HAP-1 (cell line): ENCODE measurements at regions of chr12 and their contacts with region 1.

Region 1: DNA sequence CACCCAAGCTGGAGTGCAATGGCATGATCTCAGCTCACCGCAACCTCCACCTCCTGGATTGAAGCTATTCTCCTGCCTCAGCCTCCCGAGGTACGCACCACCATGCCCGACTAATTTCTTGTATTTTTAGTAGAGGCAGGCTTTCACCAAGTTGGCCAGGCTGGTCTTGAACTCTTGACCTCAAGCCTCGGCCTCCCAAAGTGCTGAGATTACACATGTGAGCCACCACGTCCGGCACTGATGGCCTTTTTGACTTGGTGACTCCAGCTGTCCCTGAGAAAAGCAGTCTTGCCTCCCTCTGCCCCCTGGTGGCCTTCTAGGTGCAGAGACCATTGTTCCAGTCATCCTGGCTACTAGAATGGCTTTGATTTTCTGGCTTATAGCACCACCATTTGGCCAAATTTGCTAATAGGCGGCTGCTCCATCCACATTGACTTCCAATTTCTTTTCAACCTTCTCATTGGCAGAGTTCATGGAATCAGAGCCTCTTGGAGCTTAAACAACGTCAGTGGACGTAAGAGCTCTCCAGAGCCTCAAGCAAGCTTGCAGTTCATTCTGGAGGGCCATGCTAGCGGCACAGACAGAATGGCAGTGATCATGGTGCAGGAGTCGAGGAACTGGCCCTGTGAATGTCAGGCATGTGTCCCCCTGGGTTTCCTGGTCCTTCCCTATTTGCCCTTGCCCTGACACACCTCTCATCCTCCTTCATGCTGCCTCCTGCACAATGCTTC is 25.4 kb upstream of the EIF4B start:
- DNase-seq: peak; percentile 91 to 95
- H3K4me3 ChIP-seq: no peak overlapping the region
- H3K4me1 ChIP-seq: peaks cover 11% of the 10 kb centered on the region
- H3K27me3 ChIP-seq: no peaks in the 10 kb centered on the region

Region 2: GRCh38 chr12:51726931-51727330 is 1253.9 kb before region 1 on chr12:
- in situ Hi-C with region 1: no loop called
- DNase-seq: no peak
- H3K4me3 ChIP-seq: no peak overlapping the region
- H3K4me1 ChIP-seq: no peaks in the 10 kb centered on the region
- H3K27me3 ChIP-seq: no peaks in the 10 kb centered on the region

Region 3: DNA sequence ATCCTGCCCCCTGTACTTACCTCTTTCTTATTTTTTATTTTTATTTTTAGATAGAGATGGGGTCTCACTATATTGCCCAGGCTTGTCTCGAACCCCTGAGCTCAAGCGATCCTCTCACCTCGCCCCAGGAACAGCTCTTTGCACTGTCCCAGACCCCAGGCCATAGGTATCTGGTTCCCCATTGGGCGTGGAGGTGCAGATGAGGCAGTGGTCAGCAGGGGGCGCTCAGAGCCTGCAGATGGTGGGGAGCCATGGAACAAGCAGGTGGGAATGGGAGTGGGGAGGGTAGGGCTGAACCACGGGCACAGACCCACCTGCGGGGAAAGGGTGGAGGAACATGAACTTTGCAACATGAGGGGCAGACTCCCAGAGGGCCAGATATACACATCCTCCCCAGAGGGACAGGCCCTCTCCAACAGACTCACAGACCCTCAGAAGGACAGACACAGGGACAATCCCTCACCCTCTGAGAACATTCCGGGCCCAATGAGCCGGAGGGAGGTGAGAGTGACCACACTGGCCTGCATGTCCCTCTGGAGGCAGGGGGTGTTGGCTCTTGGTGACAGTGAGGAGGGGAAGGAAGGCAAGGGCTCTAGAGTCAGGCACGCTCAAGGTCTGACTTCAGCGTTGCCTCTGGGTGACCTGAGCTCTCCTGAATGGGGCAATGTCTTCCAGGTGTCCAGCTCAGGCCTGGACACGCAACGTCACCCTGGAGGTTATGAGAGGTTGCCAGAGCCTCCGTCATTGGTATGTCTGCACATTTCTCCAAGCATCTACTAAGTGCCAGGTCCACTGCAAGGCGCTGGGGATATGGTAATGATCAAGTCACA is 823.9 kb before region 1 on chr12:
- in situ Hi-C with region 1: loop called (anchors 10 kb)
- DNase-seq: peak; percentile 50 to 89
- H3K4me3 ChIP-seq: no peak overlapping the region
- H3K4me1 ChIP-seq: no peaks in the 10 kb centered on the region
- H3K27me3 ChIP-seq: no peaks in the 10 kb centered on the region

Region 4: DNA sequence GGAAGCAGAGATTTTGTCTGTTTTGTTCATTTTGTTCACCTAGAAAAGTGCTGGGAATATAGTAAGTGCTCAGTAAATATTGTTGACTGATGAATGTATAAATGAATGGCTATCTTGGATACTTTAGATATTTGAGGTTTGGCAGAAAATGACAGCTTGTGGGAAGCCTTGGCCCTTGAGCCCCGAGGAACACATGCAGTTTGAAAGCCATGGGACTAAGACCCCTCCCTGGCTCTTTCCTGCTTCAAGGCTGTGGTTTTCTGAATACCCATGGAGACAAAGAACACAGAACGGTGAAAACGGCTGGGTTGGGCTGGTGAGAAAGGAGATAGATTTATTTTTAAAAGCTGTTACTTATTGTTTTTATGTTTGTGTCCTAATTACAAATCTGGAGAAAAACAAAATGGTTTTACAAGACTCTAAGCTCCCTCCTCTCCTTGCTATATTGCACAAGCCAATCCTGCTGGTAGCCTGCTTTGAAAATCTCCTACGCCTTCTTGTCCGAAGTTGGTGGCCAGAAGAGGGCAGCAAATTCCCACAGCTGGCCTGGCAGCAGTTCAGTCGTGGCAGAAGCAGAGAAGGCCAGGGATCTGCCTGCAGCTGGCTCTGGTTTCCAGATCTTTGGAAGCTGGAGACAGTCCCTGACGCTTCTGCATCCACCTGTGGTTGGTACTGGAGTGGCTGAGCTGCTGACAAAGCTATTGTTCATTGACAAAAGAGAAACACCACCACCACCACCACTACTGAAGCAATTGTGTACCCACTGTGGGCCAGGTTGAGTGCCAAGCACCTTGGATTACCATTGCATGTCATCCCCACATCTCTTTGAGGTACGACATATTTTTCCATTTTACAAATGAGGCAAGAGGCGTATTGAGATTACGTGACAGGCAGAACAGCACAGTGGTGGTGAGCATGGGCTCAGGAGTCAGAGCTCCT is 608.4 kb before region 1 on chr12:
- in situ Hi-C with region 1: loop called (anchors 10 kb)
- DNase-seq: peak; percentile 57 to 79
- H3K4me3 ChIP-seq: no peak overlapping the region
- H3K4me1 ChIP-seq: no peaks in the 10 kb centered on the region
- H3K27me3 ChIP-seq: peaks cover 11% of the 10 kb centered on the region

Region 5: GRCh38 chr12:52582971-52583456 is 397.8 kb before region 1 on chr12:
- in situ Hi-C with region 1: loop called (anchors 10 kb)
- DNase-seq: peak; percentile 40 to 64
- H3K4me3 ChIP-seq: no peak overlapping the region
- H3K4me1 ChIP-seq: no peaks in the 10 kb centered on the region
- H3K27me3 ChIP-seq: peaks cover 17% of the 10 kb centered on the region

Region 6: DNA sequence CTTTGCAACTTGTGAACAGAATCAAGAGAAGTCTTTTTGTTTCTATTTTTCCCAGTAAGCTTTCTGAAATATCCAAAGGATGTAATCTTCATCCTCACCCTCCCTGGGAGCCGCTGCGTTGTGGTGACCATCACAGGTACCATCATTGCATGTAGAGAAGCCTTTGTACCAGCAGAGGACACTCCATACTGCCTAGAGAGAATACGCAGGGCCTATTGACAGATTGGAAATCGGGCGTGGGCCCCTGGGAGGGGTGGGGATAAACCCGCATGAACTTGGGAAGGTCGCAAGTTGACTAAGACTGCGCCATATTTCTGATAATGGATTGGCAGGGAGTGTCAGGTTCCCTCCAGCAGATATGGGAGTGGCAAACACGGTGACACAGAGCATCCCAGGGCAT is 313.3 kb before region 1 on chr12:
- in situ Hi-C with region 1: loop called (anchors 25 kb)
- DNase-seq: no peak
- H3K4me3 ChIP-seq: no peak overlapping the region
- H3K4me1 ChIP-seq: no peaks in the 10 kb centered on the region
- H3K27me3 ChIP-seq: no peaks in the 10 kb centered on the region; the same call in 1 of the 2 replicates

Region 7: GRCh38 chr12:52748578-52748977 is 232.3 kb before region 1 on chr12:
- in situ Hi-C with region 1: no loop called
- DNase-seq: no peak
- H3K4me3 ChIP-seq: no peak overlapping the region
- H3K4me1 ChIP-seq: no peaks in the 10 kb centered on the region
- H3K27me3 ChIP-seq: peaks cover 12% of the 10 kb centered on the region; the same call in 1 of the 2 replicates

Region 8: DNA sequence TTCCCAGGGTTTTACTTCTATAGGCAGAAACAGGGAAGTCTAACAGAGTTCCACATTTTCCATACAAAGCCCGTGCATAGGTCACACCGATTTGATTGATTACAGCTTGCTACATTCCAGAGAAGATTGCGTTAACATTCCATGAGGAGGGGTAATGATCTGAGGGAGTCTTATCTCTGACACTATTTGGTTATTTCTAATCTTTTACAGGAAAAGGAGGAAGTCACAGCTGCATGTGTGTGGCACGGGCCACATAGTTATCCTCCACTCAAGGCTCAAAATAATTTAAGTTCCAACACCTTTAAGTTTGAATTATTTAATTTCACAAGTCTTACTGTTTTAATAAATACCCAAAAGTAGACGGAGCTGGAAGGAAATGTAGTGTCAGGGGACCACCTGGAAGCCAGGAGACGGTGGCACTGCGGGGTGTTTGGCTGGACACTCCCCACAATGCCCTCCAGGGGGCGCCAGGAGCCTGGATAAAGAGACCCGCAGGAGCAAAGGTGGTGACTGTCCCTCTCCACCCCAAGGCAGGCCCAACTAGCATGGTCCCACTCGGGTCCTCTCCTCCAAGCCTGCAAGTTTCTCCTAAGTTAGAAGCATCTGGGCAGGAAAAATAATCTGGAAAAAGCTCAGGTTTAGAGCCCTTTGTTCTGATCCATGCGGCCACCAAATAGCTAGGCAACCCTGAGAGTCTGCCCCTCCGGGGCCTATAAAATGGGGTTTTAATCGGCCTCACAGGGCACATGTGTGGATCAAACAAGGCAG is 96.1 kb before region 1 on chr12:
- in situ Hi-C with region 1: loop called (anchors 5 kb)
- DNase-seq: peak; percentile 63 to 89
- H3K4me3 ChIP-seq: no peak overlapping the region
- H3K4me1 ChIP-seq: peaks cover 5% of the 10 kb centered on the region
- H3K27me3 ChIP-seq: no peaks in the 10 kb centered on the region